ENCODE measurements at regions of chr7 and their contacts with region 1.

Region 1: GRCh38 chr7:64902806-64903721 is at the start of gene ZNF273:
- DNase-seq: peak; percentile 94 to 95
- H3K4me3 ChIP-seq: peak within 1 kb of the TSS; percentile 73
- H3K4me3 Mint-ChIP-seq: peak within 1 kb of the TSS; percentile 95
- H3K27ac Mint-ChIP-seq: peak within 1 kb of the TSS; percentile 94
- H3K4me1 ChIP-seq: peaks cover 4% of the 10 kb centered on the region
- H3K4me1 Mint-ChIP-seq: peaks cover 23% of the 10 kb centered on the region
- H3K27me3 ChIP-seq: no peaks in the 10 kb centered on the region
- H3K27me3 Mint-ChIP-seq: no peaks in the 10 kb centered on the region
- CTCF ChIP-seq: no peak
- total RNA-seq, gene ZNF273: 10.1 and 10.7 TPM in 2 replicates

Region 2: GRCh38 chr7:64630496-64630895 is 272.6 kb before region 1 on chr7:
- CTCF ChIA-PET with region 1: no interaction called
- POLR2A ChIA-PET with region 1: no interaction called
- intact Hi-C with region 1: no loop called
- DNase-seq: peak in 1 of 2 experiments; percentile 7
- H3K4me3 ChIP-seq: no peak overlapping the region
- H3K4me3 Mint-ChIP-seq: no peak overlapping the region
- H3K27ac Mint-ChIP-seq: no peak overlapping the region
- H3K4me1 ChIP-seq: no peaks in the 10 kb centered on the region
- H3K4me1 Mint-ChIP-seq: no peaks in the 10 kb centered on the region
- H3K27me3 ChIP-seq: no peaks in the 10 kb centered on the region
- H3K27me3 Mint-ChIP-seq: no peaks in the 10 kb centered on the region
- CTCF ChIP-seq: peak; percentile 44 to 59

Region 3: GRCh38 chr7:64744680-64745079 is 158.4 kb before region 1 on chr7:
- CTCF ChIA-PET with region 1: no interaction called
- POLR2A ChIA-PET with region 1: no interaction called
- intact Hi-C with region 1: no loop called
- DNase-seq: no peak
- H3K4me3 ChIP-seq: no peak overlapping the region
- H3K4me3 Mint-ChIP-seq: no peak overlapping the region
- H3K27ac Mint-ChIP-seq: no peak overlapping the region
- H3K4me1 ChIP-seq: no peaks in the 10 kb centered on the region
- H3K4me1 Mint-ChIP-seq: no peaks in the 10 kb centered on the region
- H3K27me3 ChIP-seq: no peaks in the 10 kb centered on the region
- H3K27me3 Mint-ChIP-seq: no peaks in the 10 kb centered on the region
- CTCF ChIP-seq: no peak

Region 4: DNA sequence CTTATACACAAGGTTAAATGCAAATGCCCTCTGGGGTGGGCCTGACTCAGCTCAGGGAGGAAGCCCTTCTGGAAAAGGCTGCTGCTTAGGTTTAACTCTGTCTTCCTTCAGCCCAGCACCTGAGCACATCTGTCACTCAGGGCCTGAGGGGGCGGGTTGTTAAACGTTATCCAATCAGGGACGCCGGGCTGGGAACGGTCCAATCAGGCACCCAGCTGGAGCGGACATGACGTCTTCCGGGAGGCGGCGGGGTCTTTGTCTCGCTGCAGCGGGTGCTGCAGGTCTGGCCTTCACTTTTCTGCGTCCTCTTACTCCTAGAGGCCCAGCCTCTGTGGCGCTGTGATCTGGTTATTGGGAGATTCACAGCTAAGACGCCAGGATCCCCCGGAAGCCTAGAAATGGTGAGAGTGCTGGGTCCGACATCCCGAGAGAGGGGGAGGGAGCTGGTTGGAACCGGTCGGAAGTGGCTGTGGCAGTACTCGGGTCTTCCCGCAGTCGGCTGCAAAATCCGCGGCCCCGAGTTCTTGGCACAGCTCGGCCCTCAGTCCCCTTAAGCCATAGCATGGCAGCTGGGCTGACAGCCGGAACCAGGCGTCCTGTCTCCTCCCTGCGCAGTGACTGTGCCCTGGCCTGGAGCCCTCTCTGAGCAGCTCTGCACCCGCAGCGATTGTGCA is 108.8 kb before region 1 on chr7 and contains the start of gene ZNF138:
- CTCF ChIA-PET with region 1: no interaction called
- POLR2A ChIA-PET with region 1: no interaction called
- intact Hi-C with region 1: loop called (anchors 1 kb)
- DNase-seq: peak; percentile 96 to 97
- H3K4me3 ChIP-seq: peak within 1 kb of the TSS; percentile 92
- H3K4me3 Mint-ChIP-seq: peak within 1 kb of the TSS; percentile 96
- H3K27ac Mint-ChIP-seq: peak within 1 kb of the TSS; percentile 97
- H3K4me1 ChIP-seq: 0 out of 2 replicates have a peak, but pooled peaks cover 4% of the 10 kb centered on the region
- H3K4me1 Mint-ChIP-seq: no peaks in the 10 kb centered on the region
- H3K27me3 ChIP-seq: no peaks in the 10 kb centered on the region
- H3K27me3 Mint-ChIP-seq: no peaks in the 10 kb centered on the region
- CTCF ChIP-seq: no peak
- total RNA-seq, gene ZNF138: 10.2 and 12.5 TPM in 2 replicates

Region 5: DNA sequence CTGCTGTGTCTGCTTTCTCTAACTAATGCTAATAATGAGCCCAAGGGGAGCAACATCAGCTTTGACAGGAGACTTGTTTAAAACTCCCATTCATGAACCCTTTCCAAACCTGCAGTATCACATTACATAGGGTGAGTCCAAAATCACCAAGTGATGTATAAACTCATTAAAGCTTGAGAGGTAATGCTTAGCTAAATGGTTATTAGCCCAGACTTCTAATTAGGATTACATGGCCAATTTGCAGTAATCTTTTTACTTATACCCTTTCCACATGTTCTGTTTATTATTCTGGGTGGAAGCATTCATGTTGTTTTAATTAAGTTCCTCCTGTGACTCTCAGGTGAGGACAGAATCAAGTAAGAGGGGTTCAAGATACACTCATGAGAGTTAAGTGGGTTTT is 91.3 kb before region 1 on chr7:
- CTCF ChIA-PET with region 1: no interaction called
- POLR2A ChIA-PET with region 1: interaction called, 10 read pairs
- intact Hi-C with region 1: no loop called
- DNase-seq: no peak
- H3K4me3 ChIP-seq: no peak overlapping the region
- H3K4me3 Mint-ChIP-seq: no peak overlapping the region
- H3K27ac Mint-ChIP-seq: no peak overlapping the region
- H3K4me1 ChIP-seq: no peaks in the 10 kb centered on the region
- H3K4me1 Mint-ChIP-seq: no peaks in the 10 kb centered on the region
- H3K27me3 ChIP-seq: no peaks in the 10 kb centered on the region
- H3K27me3 Mint-ChIP-seq: no peaks in the 10 kb centered on the region
- CTCF ChIP-seq: no peak

Region 6: DNA sequence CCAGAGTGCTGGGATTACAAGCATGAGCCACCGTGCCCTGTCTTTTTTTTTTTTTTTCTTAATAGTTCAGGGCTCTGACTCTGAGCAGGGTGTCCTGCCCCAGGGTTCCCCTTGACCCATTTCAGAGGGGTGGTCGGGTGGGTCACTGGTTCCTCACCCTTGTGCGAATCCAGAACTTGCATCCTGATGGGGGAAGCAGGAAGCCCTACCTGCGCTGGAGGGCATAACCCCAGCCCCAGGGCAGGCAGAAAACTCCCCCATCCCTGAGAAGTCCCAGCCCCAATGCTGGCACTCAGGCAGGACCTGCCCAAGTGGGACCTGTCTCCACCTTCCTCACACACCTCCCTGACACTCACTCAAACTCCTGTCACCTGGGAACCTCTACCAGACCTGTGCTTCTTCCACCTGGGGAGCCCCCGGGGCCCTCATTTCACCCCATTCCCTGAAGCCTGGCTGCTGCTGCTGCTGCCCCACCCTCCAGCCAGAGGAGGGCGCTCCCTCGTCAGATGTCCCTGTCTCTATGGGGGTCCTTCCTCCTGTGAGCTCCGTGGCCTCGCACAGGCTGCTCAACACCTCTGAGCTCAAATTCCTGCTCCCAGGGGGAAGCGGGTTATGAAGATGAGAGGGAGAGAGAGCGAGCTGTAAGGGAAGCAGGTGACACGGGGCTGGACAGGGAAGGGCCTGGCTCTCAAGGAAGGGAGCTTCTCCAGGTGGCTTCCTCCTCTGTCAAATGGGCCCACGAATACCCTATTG is 15.1 kb before region 1 on chr7:
- CTCF ChIA-PET with region 1: interaction called, 4 read pairs
- POLR2A ChIA-PET with region 1: interaction called, 3 read pairs
- intact Hi-C with region 1: loop called (anchors 1 kb)
- DNase-seq: peak; percentile 58 to 62
- H3K4me3 ChIP-seq: peak overlapping the region; percentile 63
- H3K4me3 Mint-ChIP-seq: peak overlapping the region; percentile 73
- H3K27ac Mint-ChIP-seq: no peak overlapping the region
- H3K4me1 ChIP-seq: peaks cover 6% of the 10 kb centered on the region; the same call in 1 of the 2 replicates
- H3K4me1 Mint-ChIP-seq: no peaks in the 10 kb centered on the region
- H3K27me3 ChIP-seq: no peaks in the 10 kb centered on the region
- H3K27me3 Mint-ChIP-seq: peaks cover 3% of the 10 kb centered on the region
- CTCF ChIP-seq: peak; percentile 40 to 58

Measured in Caco-2 (cell line).